ENCODE measurements at regions of chr2 and their contacts with region 1.

Region 1: DNA sequence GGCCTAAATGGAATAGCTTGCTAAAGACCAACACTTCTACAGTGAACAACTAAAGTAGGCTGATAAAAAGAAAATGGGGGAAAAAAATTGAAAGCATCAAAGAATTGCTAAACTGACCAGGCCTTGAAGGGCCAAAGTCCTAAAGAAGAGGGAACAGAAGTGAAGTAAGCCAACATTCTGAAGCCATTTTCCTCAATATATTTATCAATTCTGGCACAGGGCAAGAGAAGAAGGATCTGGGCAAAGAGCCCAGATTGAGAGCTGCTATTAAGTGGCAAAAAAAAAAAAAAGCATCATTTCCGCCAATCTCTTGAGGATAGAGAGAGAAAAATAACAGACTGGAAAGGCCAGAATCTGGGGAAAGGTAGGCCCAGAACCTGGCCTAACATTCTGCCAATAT is 25.7 kb downstream of the FANCL start:
- DNase-seq: no peak
- ATAC-seq: no peak
- H3K4me3 ChIP-seq: no peak overlapping the region
- H3K27ac ChIP-seq: no peak overlapping the region
- H3K4me1 ChIP-seq: peaks cover 0 to 8% (median 0%) of the 10 kb centered on the region in 12 donors
- H3K27me3 ChIP-seq: no peaks in the 10 kb centered on the region
- CTCF ChIP-seq: no peak
- POLR2A ChIP-seq: no peak

Region 2: DNA sequence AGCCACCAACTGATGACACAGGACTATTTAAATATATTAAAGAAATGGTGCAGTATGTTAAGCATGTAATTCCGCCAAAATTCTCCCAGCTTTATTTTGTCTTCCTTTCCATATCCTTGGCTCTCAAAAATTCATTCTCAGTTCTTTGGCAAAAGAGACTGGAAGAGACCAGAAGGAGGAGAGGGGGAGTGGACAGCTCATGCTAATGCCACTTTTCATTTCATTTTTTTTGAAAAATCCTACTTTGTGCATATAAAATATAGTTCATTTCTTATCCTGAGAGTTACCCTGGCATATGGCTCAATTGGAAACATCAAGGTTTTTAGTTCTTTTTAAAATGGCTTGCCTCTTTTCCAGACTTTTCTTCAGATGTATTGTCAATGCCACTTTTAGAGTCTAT is 297.3 kb before region 1 on chr2:
- intact Hi-C with region 1: loop called in 1 of 10 experiments (anchors 10 kb)
- DNase-seq: no peak
- ATAC-seq: no peak
- H3K4me3 ChIP-seq: no peak overlapping the region
- H3K27ac ChIP-seq: no peak overlapping the region
- H3K4me1 ChIP-seq: no peaks in the 10 kb centered on the region
- H3K27me3 ChIP-seq: no peaks in the 10 kb centered on the region
- CTCF ChIP-seq: no peak
- POLR2A ChIP-seq: no peak

Region 3: DNA sequence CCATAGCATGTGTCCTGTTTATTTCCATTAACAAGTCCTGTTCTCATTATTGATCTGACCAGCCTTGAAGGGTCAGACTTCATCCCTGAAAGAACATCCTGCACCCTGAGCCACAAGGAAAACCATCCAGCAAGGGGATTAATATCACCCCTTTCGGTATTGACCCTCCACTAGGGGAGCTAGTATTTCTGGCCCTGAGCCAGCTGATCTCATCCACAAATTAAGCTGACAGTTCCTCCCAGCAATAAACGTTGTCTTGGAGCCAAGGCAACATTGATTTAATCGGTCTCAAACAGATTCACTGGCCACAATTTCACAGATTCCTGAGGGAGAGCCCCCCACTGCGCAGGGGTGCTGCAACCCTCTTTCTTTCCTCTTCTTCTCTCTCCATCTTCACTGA is 378.7 kb after region 1 on chr2:
- intact Hi-C with region 1: no loop called
- DNase-seq: no peak
- ATAC-seq: no peak
- H3K4me3 ChIP-seq: no peak overlapping the region
- H3K27ac ChIP-seq: no peak overlapping the region
- H3K4me1 ChIP-seq: no peaks in the 10 kb centered on the region
- H3K27me3 ChIP-seq: no peaks in the 10 kb centered on the region
- CTCF ChIP-seq: no peak
- POLR2A ChIP-seq: no peak